Esophagus muscularis mucosa (tissue), 4 donors: ENCODE measurements at regions of chr12 and their contacts with region 1.

Region 1: GRCh38 chr12:112382232-112382796 is at the start of gene HECTD4:
- DNase-seq: peak; percentile 96
- H3K4me3 ChIP-seq: peak within 1 kb of the TSS; percentile 92 to 99 (median 95)
- H3K27ac ChIP-seq: peak within 1 kb of the TSS; percentile 82 to 91 (median 86)
- H3K4me1 ChIP-seq: peaks cover 14 to 34% (median 25%) of the 10 kb centered on the region in 4 donors
- H3K27me3 ChIP-seq: no peaks in the 10 kb centered on the region
- CTCF ChIP-seq: peak in 1 of 3 experiments; percentile 27
- EP300 ChIP-seq: no peak
- POLR2A ChIP-seq: no peak
- total RNA-seq, gene HECTD4: 27.3 to 59.3 (median 44.9) TPM

Region 2: GRCh38 chr12:111942557-111942956 is 439.8 kb before region 1 on chr12:
- intact Hi-C with region 1: loop called (anchors 10 kb)
- DNase-seq: no peak
- H3K4me3 ChIP-seq: no peak overlapping the region
- H3K27ac ChIP-seq: no peak overlapping the region
- H3K4me1 ChIP-seq: peaks cover 0 to 20% (median 11%) of the 10 kb centered on the region in 4 donors
- H3K27me3 ChIP-seq: no peaks in the 10 kb centered on the region
- CTCF ChIP-seq: no peak
- EP300 ChIP-seq: no peak
- POLR2A ChIP-seq: no peak

Region 3: DNA sequence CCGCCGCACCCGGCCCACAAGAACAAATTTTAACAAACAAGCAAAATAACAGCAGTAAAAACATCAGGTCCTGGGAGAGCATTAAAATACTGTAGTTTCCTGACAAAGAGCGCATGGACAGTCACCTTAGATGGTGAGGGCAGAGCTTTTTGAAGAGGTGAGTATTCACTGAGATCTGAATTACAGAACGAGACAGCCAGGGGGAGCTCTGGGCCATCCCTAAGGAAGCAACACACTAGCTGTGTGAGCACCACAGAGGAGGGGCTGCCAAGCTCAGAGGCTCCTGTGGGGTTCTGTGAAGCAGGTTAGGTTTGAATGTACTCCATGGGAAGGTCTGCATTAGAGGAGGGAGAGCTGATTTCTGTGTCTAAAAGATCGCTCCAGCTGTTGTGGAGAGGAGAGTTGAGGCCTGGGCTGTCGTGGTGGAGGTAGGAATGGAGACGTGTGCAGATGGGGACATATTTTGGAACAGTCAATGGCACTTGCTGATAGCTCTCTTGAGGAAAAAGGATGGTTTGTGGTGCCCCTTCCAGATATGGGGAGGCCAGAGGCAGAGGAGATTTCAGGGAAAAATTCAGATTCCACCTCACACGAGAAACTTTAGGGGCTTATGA is 184.1 kb before region 1 on chr12:
- intact Hi-C with region 1: loop called (anchors 10 kb)
- DNase-seq: no peak
- H3K4me3 ChIP-seq: no peak overlapping the region
- H3K27ac ChIP-seq: no peak overlapping the region
- H3K4me1 ChIP-seq: no peaks in the 10 kb centered on the region
- H3K27me3 ChIP-seq: no peaks in the 10 kb centered on the region
- CTCF ChIP-seq: peak; percentile 28 to 53 (median 33)
- EP300 ChIP-seq: no peak
- POLR2A ChIP-seq: no peak

Region 4: GRCh38 chr12:112283546-112283945 is 98.8 kb before region 1 on chr12:
- intact Hi-C with region 1: loop called (anchors 5 kb)
- DNase-seq: no peak
- H3K4me3 ChIP-seq: no peak overlapping the region
- H3K27ac ChIP-seq: no peak overlapping the region
- H3K4me1 ChIP-seq: peaks cover 10 to 36% (median 28%) of the 10 kb centered on the region in 4 donors
- H3K27me3 ChIP-seq: no peaks in the 10 kb centered on the region
- CTCF ChIP-seq: no peak
- EP300 ChIP-seq: no peak
- POLR2A ChIP-seq: no peak